Head of caudate nucleus (tissue), 42 donors: ENCODE measurements at regions of chr7 and their contacts with region 1.

Region 1: DNA sequence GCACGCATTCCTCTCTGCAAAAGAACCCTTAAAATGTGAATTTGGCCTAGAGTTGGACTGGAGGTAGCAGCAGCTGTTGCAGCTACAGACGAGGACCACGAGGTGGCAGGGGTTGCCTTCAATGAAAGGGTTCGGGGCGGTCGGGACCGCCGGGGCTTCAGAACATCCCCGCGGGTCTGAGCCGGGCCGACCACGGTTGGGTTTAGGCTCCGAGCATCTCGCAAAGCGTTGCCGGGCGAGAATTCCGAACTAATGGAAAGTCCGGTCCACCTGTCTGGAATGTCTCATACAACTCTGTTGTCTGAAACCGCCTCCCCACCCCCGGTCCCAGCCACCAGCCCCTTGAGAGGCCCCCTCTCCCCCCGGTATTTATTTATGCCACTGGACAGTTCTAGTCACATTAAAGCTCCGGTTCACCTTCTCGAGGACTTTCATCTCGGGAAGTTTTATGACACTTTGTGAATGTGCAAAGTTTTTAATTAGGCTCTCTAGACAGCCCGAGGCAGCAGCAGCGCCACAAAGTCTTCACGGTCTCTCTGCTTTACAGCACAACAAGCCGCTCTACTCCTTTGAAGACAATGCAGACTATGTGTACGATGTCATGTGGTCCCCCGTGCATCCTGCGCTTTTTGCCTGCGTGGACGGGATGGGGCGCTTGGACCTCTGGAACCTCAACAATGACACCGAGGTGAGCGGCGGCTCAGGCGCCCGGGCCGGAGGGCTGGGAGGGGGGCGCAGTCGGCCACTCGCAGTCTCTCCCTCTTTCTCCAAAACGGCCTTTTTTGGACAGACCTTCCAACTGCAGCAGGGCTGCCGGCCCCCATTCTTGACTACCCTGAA is 246.2 kb downstream of the SLC25A13 start:
- DNase-seq: peak; percentile 49 to 89 (median 77)

Region 2: DNA sequence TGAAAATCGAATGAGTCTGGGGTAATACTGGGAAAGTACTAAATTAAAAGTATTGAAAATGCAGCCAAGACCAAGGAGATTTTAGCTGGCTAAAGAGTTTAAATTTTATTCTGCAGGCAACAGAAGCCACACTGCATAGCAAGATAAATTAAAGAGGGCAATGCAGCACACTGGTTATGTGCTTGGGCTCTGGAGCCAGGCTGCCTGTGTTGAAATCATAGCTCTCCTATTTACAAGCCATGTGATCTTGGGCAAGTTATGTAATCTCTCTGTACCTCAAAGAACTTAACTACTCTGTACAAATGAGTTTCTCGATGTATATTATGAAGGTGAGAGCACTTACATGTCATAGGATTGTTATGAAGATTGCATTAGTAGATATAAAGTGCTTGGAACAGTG is 236.2 kb after region 1 on chr7:
- intact Hi-C with region 1: loop called (anchors 10 kb)
- DNase-seq: peak in 27 of 42 donors; percentile 19 to 82 (median 46)

Region 3: DNA sequence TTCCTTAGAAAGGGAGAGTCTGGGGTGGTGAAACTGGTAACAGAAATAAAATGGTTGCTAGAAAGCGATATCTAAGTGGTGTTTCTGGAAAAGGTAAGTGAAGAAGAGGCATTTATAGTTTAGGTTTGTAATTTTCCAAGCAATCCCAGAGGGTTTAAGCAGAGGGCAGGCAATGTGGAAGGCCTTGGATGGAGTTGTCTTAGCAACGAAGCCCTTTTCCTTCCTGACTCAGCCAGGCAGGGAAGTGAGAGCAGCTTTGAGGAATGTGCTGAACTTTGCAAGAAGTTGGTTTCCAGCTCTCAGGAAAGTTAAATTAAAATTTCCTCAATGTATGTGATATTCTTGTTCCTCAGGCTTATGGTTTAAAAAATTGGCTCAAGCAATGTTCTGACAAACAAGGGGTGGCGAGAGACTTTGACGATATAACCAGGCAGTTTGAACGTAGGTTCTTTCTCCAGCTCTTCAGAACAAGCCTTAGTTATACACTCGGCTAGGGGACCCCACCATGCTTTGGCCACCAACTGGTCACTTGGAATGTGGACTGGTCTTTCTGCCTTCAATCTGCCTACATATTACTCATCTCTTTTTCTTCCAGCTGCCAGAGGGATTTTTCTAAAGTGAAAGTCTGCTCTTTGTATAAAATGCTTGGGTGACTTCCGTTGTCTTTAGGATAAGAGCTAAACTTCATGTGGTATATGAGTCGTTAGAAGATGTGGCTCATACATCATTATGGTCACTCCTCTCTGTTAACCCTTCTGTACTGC is 313.1 kb after region 1 on chr7:
- intact Hi-C with region 1: no loop called
- DNase-seq: no peak